Tibial artery (tissue), 4 donors: ENCODE measurements at regions of chr7 and their contacts with region 1.

Region 1: GRCh38 chr7:22488643-22489462 is 11.1 kb downstream of the STEAP1B start:
- DNase-seq: peak; percentile 67 to 72
- H3K4me3 ChIP-seq: no peak overlapping the region
- H3K27ac ChIP-seq: no peak overlapping the region
- H3K4me1 ChIP-seq: no peaks in the 10 kb centered on the region
- H3K27me3 ChIP-seq: no peaks in the 10 kb centered on the region
- CTCF ChIP-seq: peak; percentile 87 to 89

Region 2: DNA sequence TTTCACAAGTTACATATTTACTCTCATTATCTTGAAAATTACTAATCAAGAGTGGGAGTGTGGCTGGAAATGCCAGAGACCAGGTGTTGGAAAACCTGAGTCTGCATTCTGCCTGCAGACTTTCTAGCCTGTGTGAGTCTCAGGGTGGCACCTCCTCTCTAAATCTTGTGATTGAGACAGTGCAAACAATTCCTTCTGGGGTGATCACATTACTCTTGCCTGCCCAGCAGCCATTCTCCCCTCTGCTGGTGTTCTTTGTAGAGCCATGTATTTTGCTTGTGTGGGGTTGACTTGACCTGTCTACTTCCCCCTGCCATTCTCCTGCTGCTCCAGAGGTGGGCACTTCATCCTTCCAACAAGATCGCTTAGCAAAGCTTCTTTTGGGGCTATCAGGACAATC is 233.0 kb before region 1 on chr7:
- intact Hi-C with region 1: loop called (anchors 5 kb)
- DNase-seq: no peak
- H3K4me3 ChIP-seq: peak overlapping the region in 1 of 2 donors; percentile 19
- H3K27ac ChIP-seq: no peak overlapping the region
- H3K4me1 ChIP-seq: peaks cover 0 to 10% (median 1%) of the 10 kb centered on the region in 4 donors
- H3K27me3 ChIP-seq: no peaks in the 10 kb centered on the region
- CTCF ChIP-seq: no peak

Region 3: GRCh38 chr7:22445140-22445743 is 43.6 kb before region 1 on chr7:
- intact Hi-C with region 1: no loop called
- DNase-seq: peak; percentile 52 to 70
- H3K4me3 ChIP-seq: no peak overlapping the region
- H3K27ac ChIP-seq: no peak overlapping the region
- H3K4me1 ChIP-seq: peaks cover 0 to 17% (median 14%) of the 10 kb centered on the region in 4 donors
- H3K27me3 ChIP-seq: no peaks in the 10 kb centered on the region
- CTCF ChIP-seq: no peak